Calu3 (cell line): ENCODE measurements at regions of chr14 and their contacts with region 1.

Region 1: GRCh38 chr14:91649930-91650329 is 82.0 kb downstream of the CATSPERB start:
- DNase-seq: peak; percentile 41
- H3K4me3 Mint-ChIP-seq: no peak overlapping the region
- H3K27ac Mint-ChIP-seq: no peak overlapping the region
- H3K4me1 Mint-ChIP-seq: peaks cover 9% of the 10 kb centered on the region
- H3K27me3 Mint-ChIP-seq: no peaks in the 10 kb centered on the region
- CTCF ChIP-seq: peak; percentile 19

Region 2: GRCh38 chr14:91388551-91388975 is 261.4 kb before region 1 on chr14:
- CTCF ChIA-PET with region 1: no interaction called
- intact Hi-C with region 1: no loop called
- DNase-seq: no peak
- H3K4me3 Mint-ChIP-seq: no peak overlapping the region
- H3K27ac Mint-ChIP-seq: no peak overlapping the region
- H3K4me1 Mint-ChIP-seq: peaks cover 9% of the 10 kb centered on the region
- H3K27me3 Mint-ChIP-seq: no peaks in the 10 kb centered on the region
- CTCF ChIP-seq: no peak

Region 3: GRCh38 chr14:91858215-91858905 is 208.4 kb after region 1 on chr14:
- CTCF ChIA-PET with region 1: no interaction called
- intact Hi-C with region 1: loop called (anchors 5 kb)
- DNase-seq: peak; percentile 63
- H3K4me3 Mint-ChIP-seq: no peak overlapping the region
- H3K27ac Mint-ChIP-seq: peak overlapping the region; percentile 58
- H3K4me1 Mint-ChIP-seq: peaks cover 17% of the 10 kb centered on the region
- H3K27me3 Mint-ChIP-seq: peaks cover 11% of the 10 kb centered on the region
- CTCF ChIP-seq: no peak

Region 4: DNA sequence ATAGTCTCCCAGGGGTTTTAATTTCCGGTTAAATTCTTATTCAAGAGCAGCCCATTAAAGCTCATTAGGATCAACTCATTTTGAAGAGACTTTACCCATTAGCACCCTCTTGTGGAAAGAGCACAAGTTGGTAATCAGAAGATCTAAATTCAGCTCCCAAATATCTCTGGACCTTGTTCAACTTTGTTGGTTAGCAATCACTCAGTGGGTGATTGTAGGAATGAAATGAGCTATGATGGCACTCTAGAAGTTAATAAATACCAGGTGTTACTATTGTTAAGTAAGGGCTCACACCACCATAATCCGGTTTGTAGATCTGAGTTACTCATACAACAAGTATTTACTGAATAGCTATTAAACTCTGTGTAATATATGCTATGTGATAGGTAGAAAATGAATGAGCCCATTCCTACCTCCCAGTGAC is 347.0 kb after region 1 on chr14:
- CTCF ChIA-PET with region 1: interaction called, 18 read pairs
- intact Hi-C with region 1: loop called (anchors 5 kb)
- DNase-seq: peak; percentile 36
- H3K4me3 Mint-ChIP-seq: peak overlapping the region; percentile 4
- H3K27ac Mint-ChIP-seq: peak overlapping the region; percentile 78
- H3K4me1 Mint-ChIP-seq: peaks cover 13% of the 10 kb centered on the region
- H3K27me3 Mint-ChIP-seq: no peaks in the 10 kb centered on the region
- CTCF ChIP-seq: no peak

Region 5: GRCh38 chr14:92392711-92393110 is 742.8 kb after region 1 on chr14:
- CTCF ChIA-PET with region 1: no interaction called
- intact Hi-C with region 1: no loop called
- DNase-seq: no peak
- H3K4me3 Mint-ChIP-seq: no peak overlapping the region
- H3K27ac Mint-ChIP-seq: no peak overlapping the region
- H3K4me1 Mint-ChIP-seq: no peaks in the 10 kb centered on the region
- H3K27me3 Mint-ChIP-seq: peaks cover 69% of the 10 kb centered on the region
- CTCF ChIP-seq: no peak